ENCODE measurements at regions of chr12 and their contacts with region 1.

Region 1: DNA sequence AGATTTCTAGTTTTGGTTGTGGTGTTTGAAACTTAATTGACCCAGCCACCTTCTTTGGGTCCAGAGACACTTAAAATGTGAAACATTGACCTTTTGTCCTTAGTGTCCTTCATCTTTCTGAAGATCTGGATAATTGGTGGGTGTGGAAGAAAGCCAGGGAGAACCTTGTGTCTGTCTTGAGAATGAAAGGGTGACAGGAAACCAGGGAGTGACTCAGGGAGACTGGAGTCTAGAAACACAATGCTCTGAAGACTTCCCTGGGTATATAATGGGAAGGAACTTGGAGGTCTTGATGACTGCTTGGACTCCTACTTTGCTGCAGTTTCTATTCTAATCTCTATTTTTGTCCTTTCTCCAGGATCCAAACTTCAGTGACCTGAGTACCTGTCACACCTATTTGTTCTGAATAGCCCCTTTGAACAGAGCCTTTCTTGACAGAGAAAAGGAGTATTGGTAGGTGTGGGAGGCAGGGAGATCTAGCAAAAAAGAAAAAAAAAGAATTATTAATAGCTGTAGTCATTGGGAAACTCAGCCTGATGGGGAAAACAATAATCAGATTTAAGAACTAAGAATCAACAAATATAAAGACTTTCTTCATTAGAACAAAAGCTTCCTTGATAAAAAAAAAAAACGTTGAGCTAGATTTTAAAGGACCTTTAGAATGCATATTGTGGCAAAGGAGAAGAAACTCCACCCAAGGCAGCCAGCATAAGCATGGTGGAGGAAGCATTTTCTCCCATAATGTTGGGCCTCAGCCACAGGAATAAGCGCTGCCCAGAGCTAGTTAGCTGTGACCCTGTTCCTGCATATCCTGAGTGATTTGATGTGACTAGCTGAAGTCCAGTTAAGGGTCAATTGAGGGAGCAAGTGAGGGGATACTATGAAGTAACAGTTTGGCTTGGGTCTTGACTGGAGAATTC is 77.9 kb upstream of the HOXC13 start:
- DNase-seq: no peak
- H3K4me3 ChIP-seq: no peak overlapping the region
- H3K27ac ChIP-seq: no peak overlapping the region
- H3K4me1 ChIP-seq: peaks cover 21% of the 10 kb centered on the region
- H3K27me3 ChIP-seq: no peaks in the 10 kb centered on the region
- CTCF ChIP-seq: no peak

Region 2: DNA sequence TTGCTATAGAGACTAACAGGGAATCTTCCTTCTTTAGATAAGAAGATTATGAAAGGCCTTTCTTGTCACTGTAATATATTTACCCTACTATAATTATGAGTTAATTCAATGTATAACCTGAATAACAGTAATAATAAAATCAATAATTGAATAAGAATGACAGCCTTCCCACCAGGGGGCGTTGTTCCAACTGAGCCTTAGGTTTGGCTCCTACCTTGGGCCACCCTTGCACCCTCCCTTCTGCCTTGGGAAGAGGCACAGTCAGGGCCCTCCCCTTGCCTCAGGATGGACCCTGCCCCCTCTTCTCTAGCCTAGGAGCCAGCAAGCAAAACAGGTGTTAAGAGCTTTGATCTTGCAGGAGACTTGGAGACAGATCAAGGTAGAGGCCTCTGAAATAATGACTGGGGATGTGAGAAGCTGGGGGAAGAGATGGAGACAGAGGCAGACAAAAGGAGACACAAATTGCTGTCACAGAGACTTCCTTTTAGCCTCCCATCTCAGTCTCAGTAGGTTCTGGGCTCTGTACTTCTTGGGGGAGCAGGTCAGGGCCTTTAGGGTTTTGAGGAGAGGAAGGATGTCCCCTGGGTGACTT is 68.9 kb before region 1 on chr12:
- CTCF ChIA-PET with region 1: no interaction called
- POLR2A ChIA-PET with region 1: no interaction called
- intact Hi-C with region 1: no loop called
- DNase-seq: peak; percentile 14 to 54
- H3K4me3 ChIP-seq: no peak overlapping the region
- H3K27ac ChIP-seq: no peak overlapping the region
- H3K4me1 ChIP-seq: peaks cover 35% of the 10 kb centered on the region
- H3K27me3 ChIP-seq: no peaks in the 10 kb centered on the region
- CTCF ChIP-seq: peak; percentile 81

Region 3: DNA sequence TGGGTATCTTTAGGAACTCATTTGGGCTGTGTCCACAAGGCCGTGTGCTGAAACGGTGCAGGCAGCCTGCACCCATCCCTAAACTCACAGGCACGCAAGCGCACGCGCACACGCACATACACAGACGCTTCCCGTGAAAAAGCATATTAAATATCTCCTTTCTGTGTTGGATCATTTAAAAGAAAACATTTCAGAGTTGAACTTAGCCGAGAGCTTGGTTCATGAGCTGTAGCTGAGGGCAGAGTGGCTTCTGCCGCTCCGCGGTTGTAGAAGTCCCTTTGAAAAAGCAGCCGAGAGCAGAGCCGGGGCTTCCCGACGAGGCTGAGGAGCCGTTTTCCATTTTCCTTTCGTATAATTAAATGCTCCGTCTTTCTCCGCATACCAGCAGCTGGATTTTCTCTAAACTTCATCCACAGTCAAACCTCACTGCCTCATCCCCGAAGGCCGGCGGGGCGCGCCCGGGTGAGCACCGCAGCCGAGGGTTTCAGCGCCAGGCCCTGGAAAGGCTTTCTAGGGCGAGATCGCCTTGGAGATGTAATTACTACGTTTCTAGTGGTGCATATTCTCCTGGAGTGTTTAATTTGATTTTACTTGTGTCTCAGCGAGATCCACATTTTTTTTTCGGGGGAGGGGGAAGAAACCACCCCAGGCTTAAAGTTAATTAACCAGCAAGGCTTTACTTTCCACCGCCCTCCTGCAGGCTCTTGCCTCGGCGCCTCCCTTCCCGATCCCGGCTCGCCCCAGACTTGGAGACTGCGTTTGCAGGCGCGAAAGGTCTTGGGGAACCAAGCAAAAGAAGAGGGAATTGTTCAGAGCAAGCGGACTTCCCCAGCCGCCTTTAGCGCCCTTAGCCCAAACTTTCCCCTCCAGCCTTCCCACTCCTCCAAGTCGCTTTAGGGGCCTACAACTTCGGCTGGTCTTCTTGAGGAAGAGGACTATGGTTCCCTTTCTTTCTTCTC is 75.0 kb after region 1 on chr12:
- CTCF ChIA-PET with region 1: no interaction called
- POLR2A ChIA-PET with region 1: interaction called, 13 read pairs
- intact Hi-C with region 1: no loop called
- DNase-seq: no peak
- H3K4me3 ChIP-seq: no peak overlapping the region
- H3K27ac ChIP-seq: no peak overlapping the region
- H3K4me1 ChIP-seq: peaks cover 5% of the 10 kb centered on the region; the same call in 1 of the 2 replicates
- H3K27me3 ChIP-seq: no peaks in the 10 kb centered on the region
- CTCF ChIP-seq: no peak

Measured in PC-9 (cell line).